ENCODE measurements at regions of chr7 and their contacts with region 1.

Region 1: GRCh38 chr7:47266131-47266706 is 315.7 kb downstream of the TNS3 start:
- DNase-seq: peak; percentile 32
- ATAC-seq: peak; percentile 95
- H3K4me3 ChIP-seq: no peak overlapping the region
- H3K27ac ChIP-seq: no peak overlapping the region
- H3K4me1 ChIP-seq: 0 out of 4 replicates have a peak, but pooled peaks cover 0 to 3% of the 10 kb centered on the region in 2 experiments
- H3K27me3 ChIP-seq: no peaks in the 10 kb centered on the region
- CTCF ChIP-seq: peak; percentile 79 to 96 (median 90)
- POLR2A ChIP-seq: no peak
- RAD21 ChIP-seq: peak; percentile 96

Region 2: DNA sequence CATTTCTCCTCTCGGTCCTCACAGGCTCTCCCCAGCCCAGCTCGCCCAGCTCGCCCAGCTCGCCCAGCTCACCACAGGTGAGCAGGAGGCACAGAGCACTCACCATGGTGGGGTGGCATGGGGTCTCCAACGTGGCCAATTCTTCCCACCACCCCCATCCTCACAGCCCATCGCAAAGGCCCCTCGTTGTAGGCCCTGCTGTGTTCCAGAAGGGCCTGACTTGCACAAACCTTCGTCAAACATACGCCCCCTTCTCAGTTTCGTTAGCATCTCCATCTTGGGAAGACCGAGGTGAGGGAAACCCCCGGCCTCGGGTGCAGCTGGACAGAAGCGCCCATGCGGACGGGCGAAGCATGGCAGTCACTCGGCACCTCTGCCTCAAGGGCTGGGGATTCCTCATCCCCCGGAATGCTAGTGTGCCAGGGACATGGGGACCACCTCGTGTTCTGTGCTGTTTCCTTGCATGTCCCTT is 11.1 kb after region 1 on chr7:
- CTCF ChIA-PET with region 1: interaction called, 14 read pairs
- POLR2A ChIA-PET with region 1: no interaction called
- RAD21 ChIA-PET with region 1: no interaction called
- intact Hi-C with region 1: no loop called
- DNase-seq: no peak
- ATAC-seq: no peak
- H3K4me3 ChIP-seq: no peak overlapping the region
- H3K27ac ChIP-seq: no peak overlapping the region
- H3K4me1 ChIP-seq: no peaks in the 10 kb centered on the region; a peak in 1 of 4 replicates
- H3K27me3 ChIP-seq: no peaks in the 10 kb centered on the region
- CTCF ChIP-seq: no peak
- POLR2A ChIP-seq: no peak
- RAD21 ChIP-seq: no peak

Region 3: DNA sequence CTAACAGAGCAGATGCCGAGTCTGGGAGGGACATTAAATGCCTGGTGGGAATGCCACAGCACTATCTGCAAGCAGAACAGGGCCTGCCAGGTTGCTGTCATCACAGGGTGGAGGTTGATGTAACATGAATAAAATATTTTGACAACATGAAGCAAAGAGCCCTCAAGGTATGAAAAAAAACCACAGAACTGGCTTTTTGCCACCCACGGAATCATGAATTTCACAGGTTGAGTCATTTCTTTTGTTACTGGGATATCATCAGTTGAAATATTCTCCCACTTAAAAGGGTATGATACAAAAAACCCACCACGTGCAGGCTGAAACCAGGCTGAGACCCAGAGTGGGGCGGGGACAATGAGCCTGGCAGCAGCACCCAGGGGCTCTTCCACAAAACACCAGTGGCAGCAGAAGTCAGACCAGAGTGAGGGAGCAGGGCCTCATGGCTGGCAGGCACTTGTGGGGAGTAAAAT is 95.6 kb after region 1 on chr7:
- CTCF ChIA-PET with region 1: no interaction called
- POLR2A ChIA-PET with region 1: no interaction called
- RAD21 ChIA-PET with region 1: no interaction called
- intact Hi-C with region 1: no loop called
- DNase-seq: peak; percentile 59
- ATAC-seq: peak; percentile 69
- H3K4me3 ChIP-seq: no peak overlapping the region
- H3K27ac ChIP-seq: no peak overlapping the region
- H3K4me1 ChIP-seq: peaks cover 13% of the 10 kb centered on the region in 2 experiments
- H3K27me3 ChIP-seq: no peaks in the 10 kb centered on the region
- CTCF ChIP-seq: no peak
- POLR2A ChIP-seq: no peak
- RAD21 ChIP-seq: no peak

Region 4: DNA sequence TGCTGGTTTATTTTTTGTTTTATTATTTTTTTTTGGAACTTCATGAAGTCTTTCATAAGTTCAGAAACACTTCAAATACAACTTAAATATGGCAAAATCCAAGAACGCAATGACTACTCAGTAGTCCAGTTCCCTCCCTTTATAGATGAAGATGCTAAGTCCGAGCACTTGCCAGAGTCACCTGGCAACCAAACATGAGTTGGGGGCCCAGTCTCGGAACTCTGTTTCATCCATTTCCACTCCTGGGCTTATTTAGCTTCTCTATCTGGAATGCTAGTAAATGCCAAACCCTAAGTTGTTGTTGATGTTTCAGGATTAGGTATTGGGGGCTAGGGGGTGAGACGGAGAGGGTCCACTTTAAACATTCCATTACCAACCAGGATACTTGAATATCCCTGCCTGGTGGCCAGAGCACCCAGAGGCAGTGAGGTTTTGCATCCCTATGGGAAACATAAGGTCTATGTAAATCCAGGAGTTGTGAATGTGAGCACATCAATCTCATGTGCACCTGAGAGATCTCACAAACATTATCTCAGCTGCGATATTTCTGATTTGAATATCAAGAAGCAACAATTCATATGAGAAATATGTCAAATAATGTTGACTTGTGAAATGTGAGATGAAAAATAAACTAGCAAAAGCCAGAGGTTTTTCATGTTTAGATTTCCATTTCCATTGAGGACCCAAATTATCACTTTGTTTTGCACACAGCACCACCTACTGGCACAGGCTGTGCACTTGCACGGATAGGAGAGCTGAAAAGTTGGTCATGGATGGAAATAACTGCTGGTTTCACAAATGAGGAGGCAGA is 552.8 kb after region 1 on chr7:
- CTCF ChIA-PET with region 1: interaction called, 53 read pairs
- POLR2A ChIA-PET with region 1: no interaction called
- RAD21 ChIA-PET with region 1: interaction called, 10 to 11 read pairs
- intact Hi-C with region 1: loop called (anchors 1 kb)
- DNase-seq: peak; percentile 34
- ATAC-seq: peak; percentile 82
- H3K4me3 ChIP-seq: no peak overlapping the region
- H3K27ac ChIP-seq: no peak overlapping the region
- H3K4me1 ChIP-seq: no peaks in the 10 kb centered on the region
- H3K27me3 ChIP-seq: no peaks in the 10 kb centered on the region
- CTCF ChIP-seq: peak; percentile 81 to 99 (median 96)
- POLR2A ChIP-seq: no peak
- RAD21 ChIP-seq: peak; percentile 93

Region 5: GRCh38 chr7:47945261-47946001 is 679.2 kb after region 1 on chr7:
- CTCF ChIA-PET with region 1: interaction called, 20 read pairs
- POLR2A ChIA-PET with region 1: no interaction called
- RAD21 ChIA-PET with region 1: interaction called in 1 of 2 experiments, 3 read pairs
- intact Hi-C with region 1: loop called (anchors 2 kb)
- DNase-seq: peak; percentile 51
- ATAC-seq: peak; percentile 84
- H3K4me3 ChIP-seq: no peak overlapping the region
- H3K27ac ChIP-seq: no peak overlapping the region
- H3K4me1 ChIP-seq: peaks cover 0 to 9% of the 10 kb centered on the region in 2 experiments; a peak in 2 of 4 replicates
- H3K27me3 ChIP-seq: no peaks in the 10 kb centered on the region
- CTCF ChIP-seq: peak; percentile 66 to 87 (median 75); a peak in 5 of 6 replicates
- POLR2A ChIP-seq: no peak
- RAD21 ChIP-seq: peak; percentile 88

Measured in HCT116 (cell line).